T-cell (primary cell): ENCODE measurements at regions of chr12 and their contacts with region 1.

Region 1: GRCh38 chr12:6944381-6945186 is 762 bp downstream of the C12orf57 start:
- DNase-seq: peak; percentile 74 to 93 (median 82)
- ATAC-seq: peak; percentile 53 to 69 (median 65)
- H3K4me3 ChIP-seq: peak overlapping the region; percentile 81 to 89
- H3K4me3 Mint-ChIP-seq: peak overlapping the region; percentile 88 to 98 (median 91)
- H3K27ac ChIP-seq: peak overlapping the region; percentile 97
- H3K27ac Mint-ChIP-seq: peak overlapping the region; percentile 97 to 100
- H3K4me1 ChIP-seq: peaks cover 28 to 72% of the 10 kb centered on the region in 2 experiments
- H3K4me1 Mint-ChIP-seq: peaks cover 63 to 69% (median 68%) of the 10 kb centered on the region in 3 donors
- H3K27me3 ChIP-seq: no peaks in the 10 kb centered on the region
- H3K27me3 Mint-ChIP-seq: no peaks in the 10 kb centered on the region

Region 2: DNA sequence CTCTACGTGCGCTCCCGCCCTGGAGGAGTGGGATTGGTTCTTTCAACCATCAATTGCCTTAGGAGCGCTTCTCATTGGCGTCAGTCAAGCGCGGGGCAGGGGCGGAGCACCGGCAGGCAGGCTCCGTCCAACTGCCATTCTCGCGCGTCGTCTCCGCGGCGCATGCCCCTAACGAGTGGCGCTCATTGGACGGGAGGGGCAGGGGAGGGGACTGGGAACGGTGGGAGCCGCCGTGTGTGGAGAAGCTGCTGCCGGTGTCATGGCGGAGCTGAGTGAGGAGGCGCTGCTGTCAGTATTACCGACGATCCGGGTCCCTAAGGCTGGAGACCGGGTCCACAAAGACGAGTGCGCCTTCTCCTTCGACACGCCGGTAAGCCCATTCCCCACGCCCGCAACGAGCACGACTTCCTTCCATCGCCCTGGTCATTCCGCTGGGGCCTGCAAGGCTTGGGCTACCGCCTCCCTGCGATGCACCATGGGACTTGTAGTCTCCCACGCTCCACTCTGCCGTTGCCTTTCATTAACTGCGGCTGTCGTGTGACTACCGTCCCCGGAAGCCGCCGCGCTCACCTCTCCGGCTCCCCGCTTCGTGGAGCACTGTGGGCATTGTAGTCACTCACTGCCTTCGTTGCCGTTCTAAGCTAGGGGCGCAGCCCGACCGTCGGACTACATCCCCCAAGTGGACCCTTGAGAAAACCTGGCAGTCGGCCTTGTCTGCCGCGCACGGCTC is 92.5 kb before region 1 on chr12 and contains the start of gene USP5:
- CTCF ChIA-PET with region 1: interaction called in 1 of 2 experiments, 11 read pairs
- POLR2A ChIA-PET with region 1: interaction called, 9 to 19 read pairs
- DNase-seq: peak; percentile 92 to 100 (median 99)
- ATAC-seq: peak; percentile 78 to 81 (median 79)
- H3K4me3 ChIP-seq: peak within 1 kb of the TSS; percentile 69 to 97
- H3K4me3 Mint-ChIP-seq: peak within 1 kb of the TSS; percentile 79 to 98 (median 94)
- H3K27ac ChIP-seq: peak within 1 kb of the TSS; percentile 94
- H3K27ac Mint-ChIP-seq: peak within 1 kb of the TSS; percentile 98 to 99
- H3K4me1 ChIP-seq: peaks cover 20 to 34% of the 10 kb centered on the region in 2 experiments
- H3K4me1 Mint-ChIP-seq: peaks cover 22 to 38% (median 33%) of the 10 kb centered on the region in 3 donors
- H3K27me3 ChIP-seq: no peaks in the 10 kb centered on the region
- H3K27me3 Mint-ChIP-seq: no peaks in the 10 kb centered on the region
- total RNA-seq, gene USP5: 64.2 to 95.8 (median 85.8) TPM

Region 3: GRCh38 chr12:6873094-6874014 is 71.2 kb before region 1 on chr12 and contains the start of gene SPSB2:
- CTCF ChIA-PET with region 1: interaction called, 11 to 14 read pairs
- POLR2A ChIA-PET with region 1: interaction called, 3 to 11 read pairs
- DNase-seq: peak; percentile 95 to 100 (median 98)
- ATAC-seq: peak; percentile 84 to 92 (median 86)
- H3K4me3 ChIP-seq: peak within 1 kb of the TSS; percentile 77 to 94
- H3K4me3 Mint-ChIP-seq: peak within 1 kb of the TSS; percentile 87 to 93 (median 89)
- H3K27ac ChIP-seq: peak within 1 kb of the TSS; percentile 69
- H3K27ac Mint-ChIP-seq: peak within 1 kb of the TSS; percentile 88 to 90
- H3K4me1 ChIP-seq: peaks cover 19 to 56% of the 10 kb centered on the region in 2 experiments
- H3K4me1 Mint-ChIP-seq: peaks cover 46 to 51% (median 48%) of the 10 kb centered on the region in 3 donors
- H3K27me3 ChIP-seq: no peaks in the 10 kb centered on the region
- H3K27me3 Mint-ChIP-seq: no peaks in the 10 kb centered on the region
- total RNA-seq, gene SPSB2: 6.2 to 25.9 (median 21.8) TPM

Region 4: DNA sequence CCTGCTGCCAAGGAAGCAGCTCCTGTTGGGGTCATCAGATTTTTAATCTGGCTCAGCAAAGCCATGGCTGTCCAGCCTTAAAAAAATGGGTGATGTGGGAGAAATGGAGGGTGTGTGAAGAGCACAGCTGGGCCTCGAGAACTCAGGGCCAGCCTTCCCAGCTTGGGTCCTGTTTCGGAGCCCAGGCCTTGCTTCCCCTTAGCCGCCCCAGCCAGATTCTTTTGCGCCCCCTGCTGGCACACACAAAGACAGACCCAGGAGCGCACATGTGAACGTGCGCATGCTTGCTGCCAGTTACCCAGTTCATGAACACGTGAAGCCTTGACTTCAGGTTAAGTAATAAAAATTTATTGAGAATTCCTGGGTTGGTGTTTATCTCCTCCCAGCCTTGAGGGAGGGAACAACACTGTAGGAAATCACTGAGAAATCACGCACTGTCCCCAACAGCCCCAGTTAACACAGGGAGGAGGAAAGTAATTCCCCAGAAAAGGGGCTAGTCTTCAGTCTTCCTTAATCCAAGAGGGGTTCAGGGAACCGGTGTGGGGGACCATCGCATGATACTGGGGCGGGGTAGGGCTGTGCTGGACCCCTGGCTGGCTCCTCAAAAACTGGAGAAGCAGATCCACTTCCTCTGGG is 20.6 kb after region 1 on chr12:
- CTCF ChIA-PET with region 1: interaction called, 58 to 126 read pairs
- POLR2A ChIA-PET with region 1: interaction called, 19 to 22 read pairs
- DNase-seq: peak; percentile 73 to 95 (median 84)
- ATAC-seq: peak; percentile 43 to 52 (median 49)
- H3K4me3 ChIP-seq: no peak overlapping the region
- H3K4me3 Mint-ChIP-seq: no peak overlapping the region
- H3K27ac ChIP-seq: peak overlapping the region; percentile 69
- H3K27ac Mint-ChIP-seq: peak overlapping the region; percentile 83 to 87
- H3K4me1 ChIP-seq: peaks cover 30 to 72% of the 10 kb centered on the region in 2 experiments
- H3K4me1 Mint-ChIP-seq: peaks cover 44 to 62% (median 55%) of the 10 kb centered on the region in 3 donors
- H3K27me3 ChIP-seq: no peaks in the 10 kb centered on the region
- H3K27me3 Mint-ChIP-seq: no peaks in the 10 kb centered on the region

Region 5: GRCh38 chr12:7035463-7035862 is 90.9 kb after region 1 on chr12:
- CTCF ChIA-PET with region 1: no interaction called
- POLR2A ChIA-PET with region 1: no interaction called
- DNase-seq: no peak
- ATAC-seq: no peak
- H3K4me3 ChIP-seq: no peak overlapping the region
- H3K4me3 Mint-ChIP-seq: no peak overlapping the region
- H3K27ac ChIP-seq: no peak overlapping the region
- H3K27ac Mint-ChIP-seq: no peak overlapping the region
- H3K4me1 ChIP-seq: peaks cover 0 to 3% of the 10 kb centered on the region in 2 experiments
- H3K4me1 Mint-ChIP-seq: peaks cover 0 to 1% (median 0%) of the 10 kb centered on the region in 3 donors
- H3K27me3 ChIP-seq: no peaks in the 10 kb centered on the region
- H3K27me3 Mint-ChIP-seq: no peaks in the 10 kb centered on the region

Region 6: GRCh38 chr12:7108796-7109571 is 164.4 kb after region 1 on chr12 and contains the start of gene C1RL:
- CTCF ChIA-PET with region 1: interaction called, 7 to 11 read pairs
- POLR2A ChIA-PET with region 1: interaction called in 1 of 2 experiments, 3 read pairs
- DNase-seq: peak in 34 of 35 experiments; percentile 24 to 82 (median 66)
- ATAC-seq: peak; percentile 24 to 53 (median 36)
- H3K4me3 ChIP-seq: peak within 1 kb of the TSS; percentile 77 to 88
- H3K4me3 Mint-ChIP-seq: peak within 1 kb of the TSS; percentile 89 to 93 (median 89)
- H3K27ac ChIP-seq: peak within 1 kb of the TSS; percentile 75
- H3K27ac Mint-ChIP-seq: peak within 1 kb of the TSS; percentile 96
- H3K4me1 ChIP-seq: peaks cover 8 to 33% of the 10 kb centered on the region in 2 experiments
- H3K4me1 Mint-ChIP-seq: peaks cover 43 to 49% (median 47%) of the 10 kb centered on the region in 3 donors
- H3K27me3 ChIP-seq: no peaks in the 10 kb centered on the region
- H3K27me3 Mint-ChIP-seq: no peaks in the 10 kb centered on the region
- total RNA-seq, gene C1RL: 18.1 to 36.6 (median 30.8) TPM